ENCODE measurements at regions of chr22 and their contacts with region 1.

Region 1: GRCh38 chr22:50012716-50013181 is at the start of gene IL17REL:
- DNase-seq: no peak
- ATAC-seq: no peak
- H3K4me3 ChIP-seq: no peak within 1 kb of the TSS
- H3K27ac ChIP-seq: no peak within 1 kb of the TSS; the same call in 1 of the 2 replicates
- H3K4me1 ChIP-seq: peaks cover 33% of the 10 kb centered on the region
- H3K27me3 ChIP-seq: no peaks in the 10 kb centered on the region; a peak in 1 of 4 replicates
- CTCF ChIP-seq: no peak
- EP300 ChIP-seq: no peak
- POLR2A ChIP-seq: no peak
- RAD21 ChIP-seq: no peak
- polyA plus RNA-seq, gene IL17REL: not detected

Region 2: DNA sequence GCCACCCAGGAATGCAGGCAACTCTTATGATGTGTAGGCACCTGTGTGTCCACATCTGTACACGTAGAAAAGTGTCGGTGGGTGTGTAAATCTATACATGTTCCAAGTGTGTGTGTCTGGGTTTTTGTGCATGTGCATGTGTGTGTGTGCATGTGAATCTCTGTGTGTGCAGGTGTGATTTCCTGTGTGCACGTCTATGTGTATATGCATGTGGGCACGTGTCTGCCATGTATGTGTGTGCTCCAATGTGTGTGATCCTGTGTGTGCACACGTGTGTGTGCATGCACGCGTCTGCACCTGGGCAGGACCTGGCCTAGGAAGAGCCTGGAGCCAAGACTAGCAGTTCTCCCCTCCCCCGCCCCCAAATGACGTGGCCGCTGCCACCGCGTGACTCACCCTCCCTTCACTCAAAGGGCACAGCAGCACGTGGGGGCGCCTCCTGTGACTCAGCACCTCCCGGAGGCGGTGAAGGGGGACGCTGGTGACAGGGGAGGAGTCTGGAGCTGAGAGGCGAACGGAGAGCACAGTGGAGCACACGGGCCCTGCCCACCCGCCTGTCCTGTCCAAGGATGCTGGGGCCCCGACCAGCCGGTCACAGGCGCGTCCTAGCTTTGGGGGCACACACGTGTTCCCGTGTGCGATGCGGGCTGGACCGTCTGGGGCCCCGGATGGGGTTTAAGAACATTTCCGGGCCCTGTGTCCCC is 42.1 kb before region 1 on chr22:
- CTCF ChIA-PET with region 1: no interaction called
- POLR2A ChIA-PET with region 1: interaction called, 14 read pairs
- RAD21 ChIA-PET with region 1: no interaction called
- SMC1A ChIA-PET with region 1: no interaction called
- in situ Hi-C with region 1: no loop called
- intact Hi-C with region 1: no loop called
- DNase-seq: peak; percentile 85
- ATAC-seq: peak; percentile 84
- H3K4me3 ChIP-seq: peak overlapping the region; percentile 76
- H3K27ac ChIP-seq: peak overlapping the region; percentile 89
- H3K4me1 ChIP-seq: peaks cover 41% of the 10 kb centered on the region
- H3K27me3 ChIP-seq: no peaks in the 10 kb centered on the region
- CTCF ChIP-seq: no peak
- EP300 ChIP-seq: peak in 1 of 2 experiments; percentile 75; a peak in 3 of 4 replicates
- POLR2A ChIP-seq: peak; percentile 91
- RAD21 ChIP-seq: no peak

Measured in GM12878 (cell line).